Activated naive CD4-positive, alpha-beta T cell treated with anti-CD3 and anti-CD28 coated beads for 36 hours (primary cell): ENCODE measurements at regions of chr10 and their contacts with region 1.

Region 1: DNA sequence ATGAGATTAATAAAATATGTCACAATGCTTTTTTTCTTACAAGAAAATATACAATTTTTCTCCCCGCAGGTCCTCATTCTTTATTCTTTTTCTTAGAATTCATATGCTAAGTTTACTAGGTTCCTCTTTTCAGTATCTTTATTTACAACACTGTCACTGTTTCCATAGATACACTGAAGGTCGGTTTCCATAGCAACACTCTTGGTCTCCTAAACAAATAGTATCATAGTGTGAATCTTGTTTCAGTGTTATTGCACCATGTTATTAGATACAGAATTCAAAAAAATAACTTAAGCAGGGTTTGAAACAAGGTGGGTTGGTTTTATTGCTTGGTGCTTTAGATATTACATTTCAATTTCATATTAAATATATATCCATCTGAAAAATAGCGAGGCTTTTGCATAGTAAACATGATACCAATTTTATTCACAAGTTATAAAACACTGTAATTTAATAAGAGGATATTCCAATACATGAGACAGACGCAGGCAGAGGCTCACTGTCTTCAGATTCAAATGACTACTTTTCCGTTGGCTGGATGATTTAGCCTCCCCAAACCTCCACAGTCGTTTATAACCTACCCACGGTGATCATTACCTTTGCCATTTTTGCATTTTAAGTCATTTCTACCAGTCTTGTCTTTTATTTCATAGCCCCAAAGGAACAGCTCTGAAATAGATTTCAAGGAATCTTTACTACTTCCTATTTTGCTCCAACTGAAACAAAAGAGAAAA is 88.9 kb upstream of the KLF6 start:
- DNase-seq: no peak
- H3K4me3 Mint-ChIP-seq: no peak overlapping the region
- H3K27ac Mint-ChIP-seq: peak overlapping the region; percentile 36
- H3K4me1 Mint-ChIP-seq: peaks cover 52% of the 10 kb centered on the region
- H3K27me3 Mint-ChIP-seq: no peaks in the 10 kb centered on the region

Region 2: GRCh38 chr10:3835770-3836169 is 38.1 kb before region 1 on chr10:
- CTCF ChIA-PET with region 1: interaction called, 3 read pairs
- intact Hi-C with region 1: loop called (anchors 1 kb)
- DNase-seq: no peak
- H3K4me3 Mint-ChIP-seq: no peak overlapping the region
- H3K27ac Mint-ChIP-seq: peak overlapping the region; percentile 78
- H3K4me1 Mint-ChIP-seq: peaks cover 36% of the 10 kb centered on the region
- H3K27me3 Mint-ChIP-seq: no peaks in the 10 kb centered on the region

Region 3: DNA sequence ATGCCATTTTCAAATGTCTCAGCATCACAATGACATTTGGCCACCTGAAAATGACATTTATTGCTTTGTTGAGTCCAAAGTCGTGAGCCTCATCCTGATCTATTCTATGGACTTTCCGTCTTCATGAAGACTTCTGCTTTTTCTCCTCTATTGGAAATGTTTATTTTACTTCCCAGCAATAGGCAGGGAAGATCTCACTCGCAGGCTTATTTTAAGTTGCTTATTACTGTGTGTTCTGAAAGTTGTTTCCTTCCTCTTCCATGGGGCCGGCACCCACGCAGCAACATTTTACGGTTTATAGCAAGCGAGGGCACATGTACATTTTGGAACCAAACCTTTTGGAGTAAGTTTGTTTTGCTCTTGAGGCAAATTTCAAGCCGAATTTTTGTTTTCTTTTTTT is 132.2 kb after region 1 on chr10:
- CTCF ChIA-PET with region 1: no interaction called
- intact Hi-C with region 1: no loop called
- DNase-seq: peak; percentile 7
- H3K4me3 Mint-ChIP-seq: no peak overlapping the region
- H3K27ac Mint-ChIP-seq: no peak overlapping the region
- H3K4me1 Mint-ChIP-seq: peaks cover 8% of the 10 kb centered on the region
- H3K27me3 Mint-ChIP-seq: peaks cover 1% of the 10 kb centered on the region